ENCODE measurements at regions of chr19 and their contacts with region 1.

Region 1: GRCh38 chr19:43446746-43447489 is 18.5 kb downstream of the LYPD3 start:
- DNase-seq: no peak
- H3K4me3 ChIP-seq: no peak overlapping the region
- H3K27ac ChIP-seq: no peak overlapping the region
- H3K4me1 ChIP-seq: no peaks in the 10 kb centered on the region
- H3K27me3 ChIP-seq: no peaks in the 10 kb centered on the region
- CTCF ChIP-seq: peak; percentile 92 to 99 (median 96)
- POLR2A ChIP-seq: no peak

Region 2: GRCh38 chr19:43519436-43520088 is 72.6 kb after region 1 on chr19:
- intact Hi-C with region 1: loop called (anchors 5 kb)
- DNase-seq: no peak
- H3K4me3 ChIP-seq: no peak overlapping the region
- H3K27ac ChIP-seq: no peak overlapping the region
- H3K4me1 ChIP-seq: peaks cover 11% of the 10 kb centered on the region
- H3K27me3 ChIP-seq: no peaks in the 10 kb centered on the region
- CTCF ChIP-seq: peak; percentile 90 to 93 (median 91)
- POLR2A ChIP-seq: no peak

Measured in vagina (tissue), 2 donors.